ENCODE measurements at regions of chr9 and their contacts with region 1.

Region 1: GRCh38 chr9:28389411-28389810 is 816.1 kb upstream of the C9orf72 start:
- DNase-seq: no peak
- ATAC-seq: no peak
- H3K4me3 ChIP-seq: no peak overlapping the region
- H3K4me3 Mint-ChIP-seq: no peak overlapping the region
- H3K27ac ChIP-seq: no peak overlapping the region
- H3K27ac Mint-ChIP-seq: no peak overlapping the region
- H3K4me1 ChIP-seq: no peaks in the 10 kb centered on the region
- H3K4me1 Mint-ChIP-seq: no peaks in the 10 kb centered on the region
- H3K27me3 ChIP-seq: no peaks in the 10 kb centered on the region
- H3K27me3 Mint-ChIP-seq: no peaks in the 10 kb centered on the region
- CTCF ChIP-seq: no peak

Region 2: DNA sequence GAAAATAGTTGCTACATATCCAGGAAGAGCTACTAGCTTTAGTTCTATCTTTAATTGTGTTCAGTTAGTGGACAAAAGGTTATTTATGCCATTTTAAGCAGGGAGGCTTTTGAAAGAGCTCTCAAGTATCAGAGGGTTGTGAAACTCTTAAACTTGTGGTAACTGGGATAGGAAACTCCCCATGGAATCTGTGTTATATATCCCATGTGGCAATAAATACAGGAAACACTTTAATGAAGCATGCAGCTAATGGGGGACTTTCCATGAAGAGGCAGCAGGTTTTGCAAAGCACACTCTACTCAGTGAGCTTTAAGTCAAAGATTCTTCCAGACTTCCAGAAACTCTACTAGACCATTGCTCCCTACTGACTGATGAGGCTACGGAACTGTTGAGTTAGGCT is 11.2 kb before region 1 on chr9:
- CTCF ChIA-PET with region 1: no interaction called
- POLR2A ChIA-PET with region 1: no interaction called
- intact Hi-C with region 1: loop called in 1 of 2 experiments (anchors 1 kb)
- DNase-seq: no peak
- ATAC-seq: no peak
- H3K4me3 ChIP-seq: no peak overlapping the region
- H3K4me3 Mint-ChIP-seq: no peak overlapping the region
- H3K27ac ChIP-seq: no peak overlapping the region
- H3K27ac Mint-ChIP-seq: no peak overlapping the region
- H3K4me1 ChIP-seq: no peaks in the 10 kb centered on the region
- H3K4me1 Mint-ChIP-seq: no peaks in the 10 kb centered on the region
- H3K27me3 ChIP-seq: no peaks in the 10 kb centered on the region
- H3K27me3 Mint-ChIP-seq: no peaks in the 10 kb centered on the region
- CTCF ChIP-seq: no peak

Measured in CD8-positive, alpha-beta T cell (primary cell).